Activated T-helper 1 cell treated with anti-CD3 and anti-CD28 coated beads, Interleukin-12 subunit alpha, Interleukin-12 subunit beta, Interleukin-2, Interleukin-4 antibody, amounts not matched to agents 30 ng/mL and 10 ng/mL and 1 ng/mL, durations not matched to agents 14 hours and 24 hours and 36 hours (primary cell): ENCODE measurements at regions of chr12 and their contacts with region 1.

Region 1: DNA sequence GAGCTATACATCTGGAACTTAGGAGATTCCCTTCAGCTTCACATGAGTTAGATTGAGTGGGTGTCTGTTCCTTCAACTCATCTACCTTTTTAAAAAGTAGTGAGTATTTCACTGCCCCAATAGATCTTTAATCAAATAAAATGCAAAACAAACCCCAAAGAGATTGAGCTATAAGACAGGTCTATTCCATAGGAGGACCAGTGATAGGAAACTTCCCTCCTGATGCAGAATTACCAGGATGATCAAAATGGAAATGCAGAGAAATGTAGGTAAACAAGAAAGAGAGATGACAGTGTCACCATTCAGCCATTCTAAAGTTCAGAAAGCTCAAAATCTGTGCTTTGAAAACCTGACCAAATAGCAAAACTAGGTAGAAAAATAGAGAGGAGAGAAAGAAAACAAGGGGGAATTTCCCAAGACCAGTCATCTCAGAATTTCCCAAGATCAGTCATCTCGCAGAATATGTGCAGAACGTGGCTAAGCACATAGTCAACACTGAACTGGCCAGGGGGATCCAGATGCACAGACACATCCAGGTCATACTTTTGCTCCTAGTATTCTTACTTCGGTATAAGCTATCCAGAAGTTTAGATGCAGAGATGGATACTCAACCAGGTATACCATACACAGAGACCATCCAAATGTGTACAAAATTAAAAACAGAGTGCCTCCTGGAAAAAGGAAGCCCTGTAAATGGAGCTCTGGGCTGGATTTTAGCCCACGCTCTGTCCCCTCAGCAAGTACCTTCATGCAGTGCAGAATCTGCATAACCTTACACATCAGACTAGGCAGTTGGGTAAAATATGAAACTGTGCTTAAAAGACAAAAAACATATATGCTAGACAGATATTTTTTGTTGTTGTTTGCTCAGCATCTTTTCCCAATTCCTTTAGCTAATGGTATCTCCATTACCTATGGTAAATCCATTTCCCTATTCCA is 27.4 kb downstream of the SLC41A2 start:
- DNase-seq: peak; percentile 47
- H3K4me3 Mint-ChIP-seq: peak overlapping the region; percentile 11
- H3K27ac Mint-ChIP-seq: peak overlapping the region; percentile 87
- H3K4me1 Mint-ChIP-seq: peaks cover 38% of the 10 kb centered on the region
- H3K27me3 Mint-ChIP-seq: peaks cover 2% of the 10 kb centered on the region

Region 2: GRCh38 chr12:104604070-104604994 is 326.3 kb before region 1 on chr12:
- intact Hi-C with region 1: loop called (anchors 1 kb)
- DNase-seq: peak; percentile 34
- H3K4me3 Mint-ChIP-seq: peak overlapping the region; percentile 62
- H3K27ac Mint-ChIP-seq: peak overlapping the region; percentile 88
- H3K4me1 Mint-ChIP-seq: peaks cover 66% of the 10 kb centered on the region
- H3K27me3 Mint-ChIP-seq: no peaks in the 10 kb centered on the region

Region 3: GRCh38 chr12:104720339-104721038 is 210.2 kb before region 1 on chr12:
- intact Hi-C with region 1: loop called (anchors 1 kb)
- DNase-seq: peak; percentile 69
- H3K4me3 Mint-ChIP-seq: peak overlapping the region; percentile 81
- H3K27ac Mint-ChIP-seq: peak overlapping the region; percentile 94
- H3K4me1 Mint-ChIP-seq: peaks cover 78% of the 10 kb centered on the region
- H3K27me3 Mint-ChIP-seq: no peaks in the 10 kb centered on the region

Region 4: GRCh38 chr12:104890476-104891096 is 40.1 kb before region 1 on chr12:
- intact Hi-C with region 1: loop called (anchors 1 kb)
- DNase-seq: no peak
- H3K4me3 Mint-ChIP-seq: no peak overlapping the region
- H3K27ac Mint-ChIP-seq: peak overlapping the region; percentile 88
- H3K4me1 Mint-ChIP-seq: peaks cover 9% of the 10 kb centered on the region
- H3K27me3 Mint-ChIP-seq: peaks cover 3% of the 10 kb centered on the region

Region 5: DNA sequence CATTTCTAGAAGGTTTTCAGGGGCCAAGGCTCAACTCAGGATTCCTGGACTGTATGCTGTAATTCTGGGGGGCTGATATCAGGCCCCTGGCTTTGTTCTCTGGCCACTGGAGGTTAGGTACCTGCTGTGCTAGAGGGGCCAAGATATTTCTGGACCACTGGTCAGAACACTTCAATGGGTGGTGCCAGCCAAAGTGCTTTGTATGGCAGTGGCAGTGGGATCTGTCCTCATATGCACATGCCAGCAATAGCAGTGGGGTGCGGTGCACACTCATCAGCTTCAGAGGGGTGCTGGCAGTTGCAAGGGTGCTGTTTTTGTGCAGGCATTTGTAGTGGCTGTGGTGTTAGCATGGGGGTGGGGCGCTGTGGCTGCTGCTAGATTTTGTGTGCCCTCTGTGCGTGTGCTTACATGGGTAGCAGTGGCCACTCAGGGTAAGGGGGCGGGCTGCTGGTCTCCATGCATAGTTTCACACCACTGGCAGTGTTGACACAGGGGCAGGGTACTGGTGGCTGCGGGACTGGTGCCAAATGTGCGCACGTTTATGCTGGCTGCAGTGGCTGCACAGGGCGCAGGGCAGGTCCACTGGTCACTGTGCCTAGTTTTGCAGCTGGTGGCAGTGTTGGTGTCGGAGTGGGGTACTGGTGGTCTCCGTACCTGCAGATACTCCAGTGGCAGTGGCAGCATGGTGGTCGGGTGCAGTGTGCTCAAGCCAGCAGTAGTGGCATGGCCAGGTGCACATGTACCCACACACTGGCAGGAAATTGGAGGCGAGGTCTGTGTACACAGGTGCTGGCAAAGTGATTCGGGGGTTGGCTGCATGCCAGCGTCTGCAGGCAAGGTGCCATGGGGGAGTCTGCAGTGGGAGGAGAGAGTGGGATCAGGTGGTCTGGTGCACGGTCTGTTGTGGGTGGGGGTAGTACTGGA is 68.0 kb after region 1 on chr12:
- intact Hi-C with region 1: loop called (anchors 2 kb)
- DNase-seq: no peak
- H3K4me3 Mint-ChIP-seq: no peak overlapping the region
- H3K27ac Mint-ChIP-seq: no peak overlapping the region
- H3K4me1 Mint-ChIP-seq: no peaks in the 10 kb centered on the region
- H3K27me3 Mint-ChIP-seq: no peaks in the 10 kb centered on the region

Region 6: GRCh38 chr12:105672121-105672975 is 741.7 kb after region 1 on chr12:
- intact Hi-C with region 1: no loop called
- DNase-seq: no peak
- H3K4me3 Mint-ChIP-seq: no peak overlapping the region
- H3K27ac Mint-ChIP-seq: no peak overlapping the region
- H3K4me1 Mint-ChIP-seq: no peaks in the 10 kb centered on the region
- H3K27me3 Mint-ChIP-seq: peaks cover 2% of the 10 kb centered on the region